Calu3 (cell line): ENCODE measurements at regions of chr2 and their contacts with region 1.

Region 1: DNA sequence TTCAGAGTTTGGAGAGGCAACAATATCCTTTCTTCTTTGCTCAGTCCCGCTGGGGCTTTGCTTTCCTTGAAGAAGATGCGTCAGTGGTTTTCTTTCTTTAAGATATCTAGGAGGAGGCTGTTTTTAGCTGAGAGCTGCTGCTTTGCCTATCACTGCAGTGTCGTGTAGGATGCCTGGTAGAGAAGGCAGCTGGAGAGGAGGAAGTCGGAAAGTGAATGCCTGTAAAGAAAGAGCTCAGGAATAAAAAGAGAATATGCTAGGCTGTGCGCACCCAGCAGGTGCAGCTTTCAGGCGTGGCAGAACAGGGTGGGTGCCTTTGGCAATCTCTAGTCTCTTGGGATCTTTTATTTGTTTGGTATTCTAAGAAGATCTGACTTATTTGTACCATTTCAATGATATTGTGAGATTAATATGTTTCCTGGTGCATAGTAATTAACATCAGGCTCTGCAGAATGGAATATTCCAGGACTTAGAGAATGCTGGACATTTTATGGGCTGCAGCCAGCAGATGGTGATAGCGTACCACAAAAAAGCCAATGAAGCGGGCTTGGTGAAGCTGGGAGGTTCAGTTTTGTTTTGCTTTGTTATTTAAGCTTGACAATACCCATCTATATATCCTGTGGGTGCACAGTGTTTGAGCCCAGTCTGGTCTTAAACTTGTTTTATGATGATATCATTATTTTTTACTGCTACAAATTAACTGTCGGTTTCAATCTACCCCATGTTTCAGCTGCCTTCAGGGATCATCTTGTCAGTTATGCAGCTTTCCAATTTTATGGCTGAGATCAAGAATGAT is 34.9 kb downstream of the CAVIN2 start:
- DNase-seq: peak; percentile 64
- H3K4me3 Mint-ChIP-seq: no peak overlapping the region
- H3K27ac Mint-ChIP-seq: no peak overlapping the region
- H3K4me1 Mint-ChIP-seq: no peaks in the 10 kb centered on the region
- H3K27me3 Mint-ChIP-seq: no peaks in the 10 kb centered on the region
- CTCF ChIP-seq: peak; percentile 81

Region 2: GRCh38 chr2:191486584-191487320 is 325.3 kb before region 1 on chr2:
- CTCF ChIA-PET with region 1: no interaction called
- intact Hi-C with region 1: no loop called
- DNase-seq: peak; percentile 32
- H3K4me3 Mint-ChIP-seq: no peak overlapping the region
- H3K27ac Mint-ChIP-seq: no peak overlapping the region
- H3K4me1 Mint-ChIP-seq: peaks cover 20% of the 10 kb centered on the region
- H3K27me3 Mint-ChIP-seq: no peaks in the 10 kb centered on the region
- CTCF ChIP-seq: no peak

Region 3: GRCh38 chr2:191555092-191555742 is 256.8 kb before region 1 on chr2:
- CTCF ChIA-PET with region 1: interaction called, 9 read pairs
- intact Hi-C with region 1: loop called (anchors 2 kb)
- DNase-seq: peak; percentile 88
- H3K4me3 Mint-ChIP-seq: no peak overlapping the region
- H3K27ac Mint-ChIP-seq: no peak overlapping the region
- H3K4me1 Mint-ChIP-seq: peaks cover 8% of the 10 kb centered on the region
- H3K27me3 Mint-ChIP-seq: no peaks in the 10 kb centered on the region
- CTCF ChIP-seq: peak; percentile 58

Region 4: DNA sequence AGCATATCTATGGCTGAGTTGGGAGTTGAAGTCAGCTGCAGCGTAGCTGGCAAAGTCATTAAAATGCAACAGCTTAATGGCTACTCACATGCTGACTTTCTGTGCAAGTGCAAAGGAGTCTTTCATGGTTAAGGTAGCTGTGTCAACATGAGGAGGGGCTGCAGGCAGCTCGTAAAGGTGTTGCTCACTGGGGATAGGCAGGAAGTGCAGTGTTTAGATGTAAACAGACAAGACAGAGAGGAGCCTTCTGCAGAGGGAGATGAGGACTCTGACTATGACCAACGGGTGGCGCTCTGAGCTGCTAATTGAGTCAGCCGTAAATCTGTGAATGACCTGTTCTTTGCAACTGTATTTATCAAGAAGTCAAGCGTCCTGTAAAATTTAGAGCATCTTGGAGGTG is 57.2 kb after region 1 on chr2:
- CTCF ChIA-PET with region 1: no interaction called
- intact Hi-C with region 1: loop called (anchors 5 kb)
- DNase-seq: peak; percentile 30
- H3K4me3 Mint-ChIP-seq: no peak overlapping the region
- H3K27ac Mint-ChIP-seq: peak overlapping the region; percentile 55
- H3K4me1 Mint-ChIP-seq: peaks cover 51% of the 10 kb centered on the region
- H3K27me3 Mint-ChIP-seq: no peaks in the 10 kb centered on the region
- CTCF ChIP-seq: peak; percentile 28

Region 5: GRCh38 chr2:192162392-192163042 is 350.5 kb after region 1 on chr2:
- CTCF ChIA-PET with region 1: interaction called, 93 read pairs
- intact Hi-C with region 1: loop called (anchors 1 kb)
- DNase-seq: peak; percentile 78
- H3K4me3 Mint-ChIP-seq: no peak overlapping the region
- H3K27ac Mint-ChIP-seq: no peak overlapping the region
- H3K4me1 Mint-ChIP-seq: no peaks in the 10 kb centered on the region
- H3K27me3 Mint-ChIP-seq: no peaks in the 10 kb centered on the region
- CTCF ChIP-seq: peak; percentile 91

Region 6: GRCh38 chr2:192286093-192286701 is 474.2 kb after region 1 on chr2:
- CTCF ChIA-PET with region 1: no interaction called
- intact Hi-C with region 1: loop called (anchors 1 kb)
- DNase-seq: no peak
- H3K4me3 Mint-ChIP-seq: no peak overlapping the region
- H3K27ac Mint-ChIP-seq: no peak overlapping the region
- H3K4me1 Mint-ChIP-seq: peaks cover 8% of the 10 kb centered on the region
- H3K27me3 Mint-ChIP-seq: no peaks in the 10 kb centered on the region
- CTCF ChIP-seq: no peak